CD14-positive monocyte (primary cell): ENCODE measurements at regions of chr7 and their contacts with region 1.

Region 1: DNA sequence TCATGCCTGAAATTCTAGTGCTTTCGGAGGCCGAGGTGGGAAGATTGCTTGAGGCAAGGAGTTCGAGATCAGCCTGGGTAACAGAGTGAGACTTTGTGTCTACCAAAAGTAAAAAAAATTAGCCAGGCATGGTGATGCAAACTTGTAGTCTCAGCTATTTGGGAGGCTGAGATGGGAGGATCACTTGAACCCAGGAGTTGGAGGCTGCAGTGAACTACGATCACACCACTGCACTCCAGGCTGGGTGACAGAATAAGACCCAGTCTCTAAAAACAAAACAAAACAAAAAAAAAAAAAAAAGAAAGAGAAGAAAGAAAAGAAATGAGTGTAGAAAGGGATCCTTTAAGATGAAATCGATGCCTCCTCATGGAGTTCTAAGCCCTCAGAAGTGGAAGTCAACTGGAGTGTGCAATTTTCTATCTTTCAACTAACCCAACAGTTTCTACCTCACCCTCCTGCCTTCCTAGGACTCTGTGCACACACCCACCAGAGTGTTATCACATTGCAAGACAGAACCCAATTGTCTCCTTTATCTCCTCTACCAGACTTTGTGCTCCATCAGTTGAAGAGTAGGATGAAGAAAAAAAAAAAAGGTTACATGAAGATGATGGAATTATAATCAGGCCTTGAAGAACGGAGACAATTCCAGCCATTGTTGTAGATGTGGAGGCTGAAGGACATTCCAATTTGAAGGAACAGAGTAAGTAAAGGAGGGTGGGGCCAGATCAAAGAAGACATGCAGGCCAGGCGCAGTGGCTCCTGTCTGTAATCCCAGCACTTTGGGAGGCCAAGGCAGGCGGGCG is 26.9 kb downstream of the NYAP1 start:
- DNase-seq: no peak
- H3K4me3 ChIP-seq: no peak overlapping the region
- H3K4me3 Mint-ChIP-seq: no peak overlapping the region
- H3K27ac ChIP-seq: no peak overlapping the region
- H3K27ac Mint-ChIP-seq: no peak overlapping the region
- H3K4me1 ChIP-seq: peaks cover 3 to 4% of the 10 kb centered on the region in 2 donors
- H3K4me1 Mint-ChIP-seq: peaks cover 8% of the 10 kb centered on the region
- H3K27me3 ChIP-seq: no peaks in the 10 kb centered on the region
- H3K27me3 Mint-ChIP-seq: peaks cover 2 to 8% (median 7%) of the 10 kb centered on the region in 3 donors
- CTCF ChIP-seq: no peak

Region 2: DNA sequence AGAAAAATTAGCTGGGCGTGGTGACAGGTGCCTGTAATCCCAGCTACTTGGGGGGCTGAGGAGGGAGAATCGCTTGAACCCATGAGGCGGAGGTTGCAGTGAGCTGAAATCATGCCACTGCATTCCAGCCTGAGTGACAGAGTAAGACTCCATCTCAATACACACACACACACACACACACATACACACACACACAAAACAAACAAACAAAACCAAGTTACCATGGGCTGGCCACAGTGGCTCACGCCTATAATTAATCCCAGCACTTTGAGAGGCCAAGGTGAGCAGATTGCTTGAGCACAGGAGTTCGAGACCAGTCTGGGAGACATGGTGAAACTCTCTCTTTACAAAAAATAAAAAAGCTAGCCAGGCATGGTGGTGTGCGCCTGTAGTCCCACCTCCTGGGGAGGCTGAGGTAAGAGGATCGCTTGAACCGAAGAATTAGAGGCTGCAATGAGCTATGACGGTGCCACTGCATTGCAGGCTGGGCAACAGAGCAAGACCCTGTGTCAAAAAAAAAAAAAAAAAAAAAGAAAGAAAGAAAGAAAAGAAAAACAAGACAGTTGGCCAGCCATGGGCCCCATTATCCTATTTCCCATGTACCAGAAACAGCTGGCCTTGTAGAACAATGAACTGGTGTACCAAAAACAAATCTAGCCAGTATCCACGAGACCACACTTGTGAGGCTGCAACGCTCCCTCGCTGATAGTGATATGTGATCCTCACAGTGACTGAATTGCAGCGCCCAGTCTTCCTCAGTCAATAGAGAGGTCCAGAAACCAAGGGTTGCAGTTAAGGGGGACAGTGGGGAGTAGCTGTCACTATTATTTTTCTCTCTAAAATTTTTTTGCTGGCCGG is 21.8 kb after region 1 on chr7:
- intact Hi-C with region 1: loop called in 1 of 2 experiments (anchors 2 kb)
- DNase-seq: no peak
- H3K4me3 ChIP-seq: no peak overlapping the region
- H3K4me3 Mint-ChIP-seq: no peak overlapping the region
- H3K27ac ChIP-seq: no peak overlapping the region
- H3K27ac Mint-ChIP-seq: no peak overlapping the region
- H3K4me1 ChIP-seq: no peaks in the 10 kb centered on the region
- H3K4me1 Mint-ChIP-seq: no peaks in the 10 kb centered on the region
- H3K27me3 ChIP-seq: no peaks in the 10 kb centered on the region
- H3K27me3 Mint-ChIP-seq: peaks cover 2 to 6% (median 2%) of the 10 kb centered on the region in 3 donors
- CTCF ChIP-seq: no peak

Region 3: GRCh38 chr7:100545360-100546128 is 34.9 kb after region 1 on chr7:
- intact Hi-C with region 1: loop called in 1 of 2 experiments (anchors 5 kb)
- DNase-seq: peak in 2 of 3 donors; percentile 10 to 27
- H3K4me3 ChIP-seq: no peak overlapping the region
- H3K4me3 Mint-ChIP-seq: no peak overlapping the region
- H3K27ac ChIP-seq: peak overlapping the region in 1 of 2 donors; percentile 12
- H3K27ac Mint-ChIP-seq: no peak overlapping the region
- H3K4me1 ChIP-seq: peaks cover 9 to 22% of the 10 kb centered on the region in 2 donors
- H3K4me1 Mint-ChIP-seq: peaks cover 18% of the 10 kb centered on the region
- H3K27me3 ChIP-seq: no peaks in the 10 kb centered on the region
- H3K27me3 Mint-ChIP-seq: peaks cover 0 to 2% (median 1%) of the 10 kb centered on the region in 3 donors
- CTCF ChIP-seq: no peak

Region 4: DNA sequence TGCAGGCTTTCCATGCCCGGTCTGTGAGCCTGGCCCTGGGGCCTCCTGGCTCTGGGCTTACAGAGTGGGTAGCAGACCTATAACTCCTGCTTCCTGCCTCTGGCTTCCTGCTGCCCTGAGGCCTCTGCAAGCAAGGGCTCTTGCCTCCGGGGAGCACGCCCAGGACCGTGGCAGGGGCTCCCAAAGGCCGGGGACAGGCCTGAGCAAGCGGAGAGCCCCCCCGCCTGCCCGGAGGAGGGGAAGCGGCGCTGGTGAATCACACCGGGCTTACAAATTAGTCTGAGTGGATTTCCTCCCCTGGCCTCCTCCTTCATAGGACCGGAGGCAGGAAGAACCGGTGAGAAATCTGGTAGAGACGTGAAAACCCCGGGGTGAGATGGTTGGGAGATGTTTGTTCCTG is 1120.0 kb after region 1 on chr7:
- intact Hi-C with region 1: no loop called
- DNase-seq: no peak
- H3K4me3 ChIP-seq: no peak overlapping the region
- H3K4me3 Mint-ChIP-seq: peak overlapping the region in 1 of 2 donors; percentile 19
- H3K27ac ChIP-seq: no peak overlapping the region
- H3K27ac Mint-ChIP-seq: no peak overlapping the region
- H3K4me1 ChIP-seq: no peaks in the 10 kb centered on the region
- H3K4me1 Mint-ChIP-seq: no peaks in the 10 kb centered on the region
- H3K27me3 ChIP-seq: no peaks in the 10 kb centered on the region
- H3K27me3 Mint-ChIP-seq: peaks cover 7 to 24% (median 13%) of the 10 kb centered on the region in 3 donors
- CTCF ChIP-seq: no peak